Naive thymus-derived CD4-positive, alpha-beta T cell (primary cell): ENCODE measurements at regions of chr5 and their contacts with region 1.

Region 1: GRCh38 chr5:178153573-178154343 is at the start of gene NHP2:
- DNase-seq: peak; percentile 89 to 98 (median 96)
- ATAC-seq: peak; percentile 100
- H3K4me3 ChIP-seq: peak within 1 kb of the TSS; percentile 85
- H3K4me3 Mint-ChIP-seq: peak within 1 kb of the TSS; percentile 88 to 98 (median 96)
- H3K27ac ChIP-seq: peak within 1 kb of the TSS; percentile 72
- H3K27ac Mint-ChIP-seq: peak within 1 kb of the TSS; percentile 55 to 96 (median 88)
- H3K4me1 ChIP-seq: peaks cover 11 to 18% of the 10 kb centered on the region in 2 donors
- H3K4me1 Mint-ChIP-seq: peaks cover 13 to 44% (median 38%) of the 10 kb centered on the region in 7 donors
- H3K27me3 ChIP-seq: no peaks in the 10 kb centered on the region
- H3K27me3 Mint-ChIP-seq: peaks cover 0 to 1% (median 0%) of the 10 kb centered on the region in 5 donors
- total RNA-seq, gene NHP2: 50.5 to 149 (median 70.5) TPM

Region 2: GRCh38 chr5:177516604-177517568 is 636.9 kb before region 1 on chr5 and contains the start of gene DDX41:
- CTCF ChIA-PET with region 1: no interaction called
- POLR2A ChIA-PET with region 1: no interaction called
- intact Hi-C with region 1: loop called in 1 of 2 experiments (anchors 1 kb)
- DNase-seq: peak; percentile 88 to 96 (median 95)
- ATAC-seq: peak; percentile 92
- H3K4me3 ChIP-seq: peak within 1 kb of the TSS; percentile 76
- H3K4me3 Mint-ChIP-seq: peak within 1 kb of the TSS; percentile 92 to 99 (median 96)
- H3K27ac ChIP-seq: peak within 1 kb of the TSS; percentile 79
- H3K27ac Mint-ChIP-seq: peak within 1 kb of the TSS; percentile 85 to 97 (median 92)
- H3K4me1 ChIP-seq: peaks cover 15 to 17% of the 10 kb centered on the region in 2 donors
- H3K4me1 Mint-ChIP-seq: peaks cover 42 to 58% (median 52%) of the 10 kb centered on the region in 7 donors
- H3K27me3 ChIP-seq: no peaks in the 10 kb centered on the region
- H3K27me3 Mint-ChIP-seq: peaks cover 0 to 2% (median 0%) of the 10 kb centered on the region in 5 donors
- total RNA-seq, gene DDX41: 65.8 to 126 (median 76.1) TPM

Region 3: GRCh38 chr5:177592010-177592834 is 561.5 kb before region 1 on chr5 and contains the start of gene TMED9:
- CTCF ChIA-PET with region 1: no interaction called
- POLR2A ChIA-PET with region 1: interaction called, 3 read pairs
- intact Hi-C with region 1: loop called in 1 of 2 experiments (anchors 1 kb)
- DNase-seq: peak; percentile 83 to 92 (median 90)
- ATAC-seq: peak; percentile 99
- H3K4me3 ChIP-seq: peak within 1 kb of the TSS; percentile 95
- H3K4me3 Mint-ChIP-seq: peak within 1 kb of the TSS; percentile 81 to 100 (median 96)
- H3K27ac ChIP-seq: peak within 1 kb of the TSS; percentile 71
- H3K27ac Mint-ChIP-seq: peak within 1 kb of the TSS; percentile 83 to 99 (median 95)
- H3K4me1 ChIP-seq: peaks cover 16% of the 10 kb centered on the region in 2 donors
- H3K4me1 Mint-ChIP-seq: peaks cover 18 to 35% (median 22%) of the 10 kb centered on the region in 7 donors
- H3K27me3 ChIP-seq: no peaks in the 10 kb centered on the region
- H3K27me3 Mint-ChIP-seq: peaks cover 8 to 29% (median 12%) of the 10 kb centered on the region in 5 donors
- total RNA-seq, gene TMED9: 50.5 to 144 (median 67.5) TPM

Region 4: GRCh38 chr5:178075840-178076548 is 77.8 kb before region 1 on chr5:
- CTCF ChIA-PET with region 1: interaction called, 117 read pairs
- POLR2A ChIA-PET with region 1: interaction called, 4 read pairs
- intact Hi-C with region 1: no loop called
- DNase-seq: peak; percentile 61 to 84 (median 76)
- ATAC-seq: peak; percentile 94
- H3K4me3 ChIP-seq: no peak overlapping the region
- H3K4me3 Mint-ChIP-seq: peak overlapping the region in 4 of 10 donors; percentile 47 to 66 (median 56)
- H3K27ac ChIP-seq: no peak overlapping the region
- H3K27ac Mint-ChIP-seq: peak overlapping the region in 2 of 9 donors; percentile 11 to 34
- H3K4me1 ChIP-seq: peaks cover 0 to 4% of the 10 kb centered on the region in 2 donors
- H3K4me1 Mint-ChIP-seq: peaks cover 0 to 6% (median 4%) of the 10 kb centered on the region in 7 donors
- H3K27me3 ChIP-seq: no peaks in the 10 kb centered on the region
- H3K27me3 Mint-ChIP-seq: peaks cover 0 to 14% (median 3%) of the 10 kb centered on the region in 5 donors

Region 5: GRCh38 chr5:178120868-178121357 is 32.8 kb before region 1 on chr5:
- CTCF ChIA-PET with region 1: interaction called, 9 read pairs
- POLR2A ChIA-PET with region 1: interaction called, 5 read pairs
- intact Hi-C with region 1: loop called in 1 of 2 experiments (anchors 1 kb)
- DNase-seq: peak; percentile 69 to 90 (median 87)
- ATAC-seq: peak; percentile 86
- H3K4me3 ChIP-seq: peak overlapping the region; percentile 50
- H3K4me3 Mint-ChIP-seq: peak overlapping the region; percentile 23 to 83 (median 69)
- H3K27ac ChIP-seq: peak overlapping the region; percentile 9
- H3K27ac Mint-ChIP-seq: peak overlapping the region in 3 of 9 donors; percentile 10 to 48 (median 29)
- H3K4me1 ChIP-seq: peaks cover 27 to 32% of the 10 kb centered on the region in 2 donors
- H3K4me1 Mint-ChIP-seq: peaks cover 15 to 30% (median 24%) of the 10 kb centered on the region in 7 donors
- H3K27me3 ChIP-seq: no peaks in the 10 kb centered on the region
- H3K27me3 Mint-ChIP-seq: peaks cover 0 to 8% (median 3%) of the 10 kb centered on the region in 5 donors

Region 6: GRCh38 chr5:178163772-178164735 is 10.3 kb after region 1 on chr5:
- CTCF ChIA-PET with region 1: interaction called, 4 read pairs
- POLR2A ChIA-PET with region 1: no interaction called
- intact Hi-C with region 1: loop called (anchors 1 kb)
- DNase-seq: peak; percentile 79 to 98 (median 92)
- ATAC-seq: peak; percentile 100
- H3K4me3 ChIP-seq: no peak overlapping the region
- H3K4me3 Mint-ChIP-seq: peak overlapping the region in 6 of 10 donors; percentile 27 to 69 (median 55)
- H3K27ac ChIP-seq: no peak overlapping the region
- H3K27ac Mint-ChIP-seq: no peak overlapping the region
- H3K4me1 ChIP-seq: peaks cover 0 to 3% of the 10 kb centered on the region in 2 donors
- H3K4me1 Mint-ChIP-seq: peaks cover 0 to 10% (median 8%) of the 10 kb centered on the region in 7 donors
- H3K27me3 ChIP-seq: no peaks in the 10 kb centered on the region
- H3K27me3 Mint-ChIP-seq: peaks cover 0 to 30% (median 9%) of the 10 kb centered on the region in 5 donors

Region 7: GRCh38 chr5:178232124-178232919 is 78.6 kb after region 1 on chr5 and contains the start of gene PHYKPL:
- CTCF ChIA-PET with region 1: no interaction called
- POLR2A ChIA-PET with region 1: no interaction called
- intact Hi-C with region 1: loop called in 1 of 2 experiments (anchors 1 kb)
- DNase-seq: peak; percentile 48 to 78 (median 63)
- ATAC-seq: peak; percentile 81
- H3K4me3 ChIP-seq: peak within 1 kb of the TSS; percentile 63
- H3K4me3 Mint-ChIP-seq: peak within 1 kb of the TSS; percentile 75 to 90 (median 84)
- H3K27ac ChIP-seq: peak within 1 kb of the TSS; percentile 95
- H3K27ac Mint-ChIP-seq: peak within 1 kb of the TSS; percentile 75 to 92 (median 86)
- H3K4me1 ChIP-seq: peaks cover 29 to 38% of the 10 kb centered on the region in 2 donors
- H3K4me1 Mint-ChIP-seq: peaks cover 38 to 73% (median 58%) of the 10 kb centered on the region in 7 donors
- H3K27me3 ChIP-seq: no peaks in the 10 kb centered on the region
- H3K27me3 Mint-ChIP-seq: no peaks in the 10 kb centered on the region
- total RNA-seq, gene PHYKPL: 107 to 265 (median 176) TPM